ENCODE measurements at regions of chr10 and their contacts with region 1.

Region 1: DNA sequence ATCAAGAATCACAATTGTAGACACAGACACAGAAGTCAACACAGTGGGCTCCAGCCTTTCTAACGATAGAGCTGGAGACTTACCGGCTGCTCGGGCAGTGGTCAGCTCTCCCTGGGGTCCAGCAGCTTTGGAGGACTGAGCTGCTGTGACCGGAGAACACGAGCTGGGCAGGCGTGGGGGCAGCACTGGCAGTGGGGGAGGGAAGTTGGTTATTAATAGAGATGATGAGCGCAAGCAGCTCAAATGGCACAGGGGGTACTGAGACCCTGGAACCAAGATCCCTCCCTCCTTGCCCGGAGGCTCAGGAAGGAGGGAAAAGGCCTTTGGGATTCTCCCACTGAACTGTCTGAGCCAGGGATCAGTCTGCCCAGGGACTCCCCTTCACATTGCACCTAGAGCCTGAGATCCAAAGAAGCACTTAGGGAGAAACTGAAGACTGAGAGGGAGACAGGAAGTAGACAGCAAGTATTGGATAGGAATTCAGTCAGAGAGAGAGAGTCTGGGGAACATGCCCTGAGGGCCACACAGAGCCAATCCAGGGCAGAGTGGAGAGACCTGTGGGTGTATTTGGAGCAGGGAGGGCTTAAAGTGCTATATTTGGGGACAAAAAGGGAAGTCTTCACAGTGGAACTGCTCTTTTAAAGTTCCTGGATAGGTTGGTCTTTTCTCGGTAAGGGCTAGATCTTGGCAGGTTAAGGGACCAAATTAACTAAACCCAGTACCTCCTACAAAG is at the start of gene MYOZ1:
- DNase-seq: peak in 1 of 5 donors; percentile 26
- H3K4me3 ChIP-seq: no peak within 1 kb of the TSS
- H3K27ac ChIP-seq: no peak within 1 kb of the TSS
- H3K4me1 ChIP-seq: peaks cover 0 to 2% (median 0%) of the 10 kb centered on the region in 3 donors
- H3K27me3 ChIP-seq: no peaks in the 10 kb centered on the region
- CTCF ChIP-seq: no peak
- total RNA-seq, gene MYOZ1: 3.5 TPM

Region 2: DNA sequence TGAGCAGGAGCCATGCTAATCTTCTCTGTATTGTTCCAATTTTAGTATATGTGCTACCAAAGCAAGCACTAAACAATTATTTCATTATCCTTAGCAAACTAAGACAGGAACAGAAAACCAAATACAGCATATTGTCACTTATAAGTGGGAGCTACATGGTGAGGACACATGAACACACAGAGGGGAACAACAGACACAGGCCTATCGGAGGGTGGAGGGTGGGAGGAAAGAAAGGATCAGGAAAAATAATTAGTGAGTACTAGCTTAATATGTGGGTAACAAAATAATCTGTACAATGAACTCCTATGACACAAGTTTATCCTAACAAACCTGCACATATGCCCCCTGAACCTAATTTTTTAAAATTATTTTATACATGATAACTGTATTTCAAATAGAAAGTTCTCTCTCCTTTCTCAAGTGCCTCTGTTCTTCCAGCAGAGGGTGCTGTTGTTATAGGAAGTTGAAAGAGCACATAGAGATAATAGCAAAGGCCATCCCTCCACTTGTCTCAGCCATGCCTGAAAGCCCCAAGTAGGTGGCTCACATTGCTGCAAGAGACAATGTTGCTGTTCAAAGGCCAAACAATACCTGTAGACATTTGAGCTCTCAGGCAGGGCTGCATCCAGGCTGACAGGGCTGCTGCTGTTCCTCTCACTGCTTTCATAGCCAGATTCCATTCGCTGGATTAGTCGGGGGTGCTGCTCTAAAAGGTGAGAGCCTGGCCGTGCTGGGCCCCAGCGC is 112.2 kb before region 1 on chr10:
- intact Hi-C with region 1: loop called (anchors 2 kb)
- DNase-seq: peak in 4 of 5 donors; percentile 46 to 92 (median 62)
- H3K4me3 ChIP-seq: no peak overlapping the region
- H3K27ac ChIP-seq: no peak overlapping the region
- H3K4me1 ChIP-seq: no peaks in the 10 kb centered on the region
- H3K27me3 ChIP-seq: no peaks in the 10 kb centered on the region
- CTCF ChIP-seq: peak; percentile 82

Measured in kidney (tissue), 22 donors.